Transverse colon (tissue), 4 donors: ENCODE measurements at regions of chr10 and their contacts with region 1.

Region 1: GRCh38 chr10:6144406-6145165 is 55.8 kb downstream of the RBM17 start:
- DNase-seq: peak; percentile 93
- H3K4me3 ChIP-seq: peak overlapping the region; percentile 74 to 89 (median 80)
- H3K27ac ChIP-seq: peak overlapping the region; percentile 87 to 95 (median 90)
- H3K4me1 ChIP-seq: peaks cover 6 to 42% (median 21%) of the 10 kb centered on the region in 4 donors
- H3K27me3 ChIP-seq: no peaks in the 10 kb centered on the region
- CTCF ChIP-seq: no peak
- EP300 ChIP-seq: no peak
- POLR2A ChIP-seq: peak; percentile 55

Region 2: DNA sequence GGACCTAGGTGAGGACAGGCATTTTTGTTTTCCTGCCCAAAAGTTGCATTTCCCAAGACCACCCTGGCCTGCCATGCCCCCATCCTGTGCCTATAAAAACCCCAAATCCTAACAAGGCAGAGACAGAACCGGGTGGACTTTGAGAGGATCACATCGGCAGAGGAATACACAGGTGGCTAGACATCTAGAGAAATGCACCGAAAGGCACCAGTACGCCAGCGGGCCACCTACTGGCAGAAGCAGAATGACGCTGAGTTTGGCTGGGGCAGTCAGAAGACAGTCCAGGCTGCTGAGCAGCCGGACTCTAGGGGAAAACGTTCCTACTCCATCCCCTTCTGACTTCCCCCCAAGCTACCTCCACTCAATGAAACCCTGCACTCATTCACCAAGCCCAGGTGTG is 945.2 kb before region 1 on chr10:
- in situ Hi-C with region 1: no loop called
- intact Hi-C with region 1: no loop called
- DNase-seq: no peak
- H3K4me3 ChIP-seq: no peak overlapping the region
- H3K27ac ChIP-seq: no peak overlapping the region
- H3K4me1 ChIP-seq: no peaks in the 10 kb centered on the region
- H3K27me3 ChIP-seq: no peaks in the 10 kb centered on the region
- CTCF ChIP-seq: no peak
- EP300 ChIP-seq: no peak
- POLR2A ChIP-seq: no peak

Region 3: DNA sequence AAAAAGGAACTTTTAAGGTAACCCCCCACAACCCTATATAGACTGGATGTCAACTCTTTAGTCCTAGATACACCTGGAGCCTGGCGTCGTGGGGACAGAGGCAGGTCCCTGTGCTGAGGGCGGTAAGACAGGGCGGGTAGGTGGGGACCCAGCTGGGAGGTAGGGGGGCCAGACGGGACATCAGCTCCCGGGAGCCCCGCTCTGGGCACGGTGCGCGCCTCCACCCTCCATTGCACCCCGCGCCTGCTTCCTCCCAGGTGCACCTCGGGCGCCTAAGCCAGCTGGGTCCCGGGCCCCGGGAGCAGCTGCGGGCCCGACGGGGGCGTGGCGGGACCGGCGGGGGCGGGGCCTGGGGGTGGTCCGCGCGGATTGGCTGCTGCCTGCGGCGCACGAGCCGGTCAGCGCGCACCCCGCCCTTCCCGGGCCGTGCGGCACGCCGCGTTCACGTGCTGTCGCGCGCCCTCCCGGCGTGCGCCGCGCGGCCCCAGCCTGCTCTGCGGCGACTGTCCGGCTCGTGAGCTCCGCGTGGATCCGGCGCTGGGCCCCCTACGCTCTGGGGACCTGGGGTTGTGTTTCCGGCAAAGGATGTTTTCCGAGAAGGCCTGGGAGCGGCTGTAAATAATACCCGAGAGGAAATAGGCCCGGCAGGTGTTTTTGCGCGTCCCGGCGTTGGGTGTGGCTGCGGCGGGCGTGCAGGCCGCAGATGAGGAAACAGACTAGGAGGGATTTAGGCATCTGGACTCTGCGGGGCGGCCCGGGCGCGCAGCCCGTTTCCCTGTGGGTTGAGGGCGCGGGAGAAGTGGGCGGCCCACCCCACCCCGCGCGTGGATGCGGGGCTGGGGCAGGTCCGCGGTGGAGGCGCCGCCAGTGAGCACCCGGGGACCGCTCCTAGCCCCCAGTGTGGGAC is 19.0 kb after region 1 on chr10:
- in situ Hi-C with region 1: no loop called
- intact Hi-C with region 1: loop called (anchors 1 kb)
- DNase-seq: peak; percentile 94
- H3K4me3 ChIP-seq: peak overlapping the region; percentile 71 to 83 (median 75)
- H3K27ac ChIP-seq: peak overlapping the region; percentile 93 to 99 (median 96)
- H3K4me1 ChIP-seq: peaks cover 12 to 28% (median 22%) of the 10 kb centered on the region in 4 donors
- H3K27me3 ChIP-seq: no peaks in the 10 kb centered on the region
- CTCF ChIP-seq: no peak
- EP300 ChIP-seq: peak; percentile 57
- POLR2A ChIP-seq: peak; percentile 76

Region 4: DNA sequence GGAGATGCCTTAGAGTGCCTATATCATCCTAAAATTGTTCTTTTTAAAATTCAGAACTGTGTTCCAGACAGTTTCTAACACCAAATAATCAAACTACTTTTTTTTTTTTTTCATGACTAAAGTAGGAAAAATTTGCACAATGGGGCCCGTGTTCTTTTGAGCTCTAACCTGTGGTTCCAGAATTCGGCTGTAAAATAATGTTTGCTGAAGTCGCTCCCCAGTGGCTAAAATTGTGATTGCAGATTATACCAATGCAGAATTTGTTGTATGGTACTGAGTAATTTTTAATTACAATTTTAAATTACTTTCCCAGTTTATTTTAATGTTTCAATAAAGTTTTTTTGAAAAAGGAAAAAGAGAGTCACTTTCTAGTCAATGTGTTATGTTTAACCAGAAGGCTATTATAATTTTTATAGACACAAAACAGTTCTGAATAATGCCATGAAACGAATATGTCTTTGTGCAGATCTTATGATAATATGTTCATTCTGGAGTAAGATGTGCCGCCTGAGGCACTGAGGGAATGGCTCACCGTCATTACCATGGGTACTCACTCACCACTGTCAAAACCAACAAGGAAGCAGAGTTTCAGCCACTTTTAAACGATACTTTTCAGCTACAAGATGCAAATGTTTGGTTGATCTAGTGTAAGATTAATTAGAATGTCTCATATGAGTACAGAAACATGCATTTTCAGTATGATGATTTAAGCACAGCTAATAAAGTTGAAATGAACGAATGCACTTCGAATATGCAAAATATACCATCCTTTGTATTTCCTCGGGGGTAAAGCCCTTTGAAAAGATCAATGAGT is 261.8 kb after region 1 on chr10:
- in situ Hi-C with region 1: no loop called
- intact Hi-C with region 1: no loop called
- DNase-seq: no peak
- H3K4me3 ChIP-seq: no peak overlapping the region
- H3K27ac ChIP-seq: no peak overlapping the region
- H3K4me1 ChIP-seq: peaks cover 0 to 23% (median 8%) of the 10 kb centered on the region in 4 donors
- H3K27me3 ChIP-seq: no peaks in the 10 kb centered on the region
- CTCF ChIP-seq: peak in 4 of 5 experiments; percentile 39 to 52 (median 44)
- EP300 ChIP-seq: no peak
- POLR2A ChIP-seq: no peak